K562 (cell line): ENCODE measurements at regions of chr12 and their contacts with region 1.

Region 1: DNA sequence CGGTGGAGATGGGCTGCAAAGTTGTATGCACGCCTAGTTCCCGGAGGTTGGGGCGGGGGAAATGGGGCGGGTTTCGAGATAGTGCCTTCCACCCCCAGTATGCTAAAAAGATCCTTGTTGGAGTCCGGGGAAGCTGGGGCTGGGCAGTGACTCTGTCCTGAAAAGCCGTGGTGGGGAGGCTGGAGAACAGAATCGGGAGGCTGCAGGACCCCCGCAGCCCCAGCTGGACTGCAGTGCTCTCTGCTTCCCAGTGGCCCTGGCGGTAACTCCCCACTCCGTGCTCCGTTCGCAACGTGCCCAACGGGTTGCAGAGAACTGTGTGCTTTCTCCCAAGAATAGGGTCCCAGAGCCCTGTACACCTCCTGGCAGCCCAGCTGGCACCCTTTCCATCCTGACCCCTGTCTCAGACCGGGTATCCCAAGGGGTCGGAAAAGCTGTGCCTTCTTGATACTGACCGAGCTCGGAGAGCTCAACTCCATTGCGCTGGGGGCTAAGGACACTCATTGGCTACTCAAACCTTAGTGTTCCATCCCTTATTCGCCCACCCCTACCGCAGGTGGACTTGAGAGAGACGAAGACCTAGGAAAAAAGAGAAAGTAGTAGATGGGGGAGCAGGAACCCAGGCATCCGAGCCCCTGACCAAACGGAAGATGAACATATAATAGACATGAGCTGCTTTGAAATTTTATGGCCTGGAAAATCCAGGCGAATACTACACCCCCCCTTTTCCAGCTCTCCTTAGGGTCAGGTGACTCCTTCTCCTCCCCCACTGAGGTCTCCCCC is 1.2 kb downstream of the GDF11 start:
- DNase-seq: peak in 3 of 4 experiments; percentile 42 to 50 (median 44)
- ATAC-seq: peak; percentile 54
- H3K4me3 ChIP-seq: peak overlapping the region; percentile 86
- H3K27ac ChIP-seq: peak overlapping the region; percentile 64; the same call in 1 of the 3 replicates
- H3K4me1 ChIP-seq: peaks cover 33 to 39% of the 10 kb centered on the region in 2 experiments
- H3K27me3 ChIP-seq: no peaks in the 10 kb centered on the region
- CTCF ChIP-seq: no peak
- EP300 ChIP-seq: no peak
- POLR2A ChIP-seq: no peak
- RAD21 ChIP-seq: no peak

Region 2: DNA sequence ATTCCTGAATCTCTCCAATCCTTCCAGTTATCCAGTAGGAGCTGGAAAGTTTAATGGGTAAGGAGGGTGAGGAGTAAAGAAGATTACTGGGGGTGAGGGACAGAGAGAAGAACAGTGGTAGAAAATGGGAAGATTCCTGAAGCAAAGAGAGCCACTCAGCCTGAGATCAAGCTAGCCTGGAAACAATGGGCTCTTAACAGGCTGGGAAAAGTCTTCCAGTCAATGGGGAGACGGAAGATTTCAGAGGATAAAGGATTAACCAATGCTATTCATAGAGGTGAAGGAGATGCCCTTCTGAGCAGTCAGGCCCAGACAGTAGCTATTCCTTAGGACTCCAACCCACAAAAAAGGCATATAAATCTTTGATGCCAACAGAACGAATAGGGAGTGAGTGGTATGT is 13.6 kb after region 1 on chr12:
- CTCF ChIA-PET with region 1: no interaction called
- POLR2A ChIA-PET with region 1: interaction called, 44 read pairs
- in situ Hi-C with region 1: no loop called
- intact Hi-C with region 1: no loop called
- DNase-seq: no peak
- ATAC-seq: no peak; the same call in 2 of the 3 replicates
- H3K4me3 ChIP-seq: no peak overlapping the region
- H3K27ac ChIP-seq: no peak overlapping the region
- H3K4me1 ChIP-seq: no peaks in the 10 kb centered on the region; a peak in 1 of 5 replicates
- H3K27me3 ChIP-seq: no peaks in the 10 kb centered on the region
- CTCF ChIP-seq: no peak
- EP300 ChIP-seq: no peak
- POLR2A ChIP-seq: no peak
- RAD21 ChIP-seq: no peak

Region 3: DNA sequence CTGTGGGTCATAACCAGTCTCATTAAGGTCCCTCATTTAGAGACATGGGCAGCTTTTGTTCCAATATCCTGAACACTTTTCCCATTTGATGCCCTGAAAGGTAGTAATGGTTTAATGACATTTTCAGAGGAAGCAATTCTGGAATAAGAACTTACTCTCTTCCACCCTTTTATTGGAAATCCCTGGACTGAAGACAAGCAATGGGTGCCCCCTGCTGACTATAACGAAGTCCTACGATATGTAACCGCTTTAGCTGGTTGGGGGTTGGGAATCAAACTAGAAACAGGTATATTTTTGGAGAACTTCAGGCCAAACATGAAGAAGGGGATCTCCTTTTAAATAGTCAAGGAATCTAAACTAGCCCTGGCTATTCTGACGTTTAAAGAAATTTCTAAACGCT is 53.0 kb after region 1 on chr12:
- CTCF ChIA-PET with region 1: interaction called, 14 read pairs
- POLR2A ChIA-PET with region 1: no interaction called
- in situ Hi-C with region 1: no loop called
- intact Hi-C with region 1: loop called (anchors 1 kb)
- DNase-seq: peak; percentile 31 to 61 (median 48)
- ATAC-seq: peak; percentile 90
- H3K4me3 ChIP-seq: no peak overlapping the region
- H3K27ac ChIP-seq: no peak overlapping the region
- H3K4me1 ChIP-seq: no peaks in the 10 kb centered on the region
- H3K27me3 ChIP-seq: no peaks in the 10 kb centered on the region
- CTCF ChIP-seq: peak; percentile 48 to 71 (median 54)
- EP300 ChIP-seq: no peak
- POLR2A ChIP-seq: no peak
- RAD21 ChIP-seq: peak; percentile 59 to 66